ENCODE measurements at regions of chr2 and their contacts with region 1.

Region 1: DNA sequence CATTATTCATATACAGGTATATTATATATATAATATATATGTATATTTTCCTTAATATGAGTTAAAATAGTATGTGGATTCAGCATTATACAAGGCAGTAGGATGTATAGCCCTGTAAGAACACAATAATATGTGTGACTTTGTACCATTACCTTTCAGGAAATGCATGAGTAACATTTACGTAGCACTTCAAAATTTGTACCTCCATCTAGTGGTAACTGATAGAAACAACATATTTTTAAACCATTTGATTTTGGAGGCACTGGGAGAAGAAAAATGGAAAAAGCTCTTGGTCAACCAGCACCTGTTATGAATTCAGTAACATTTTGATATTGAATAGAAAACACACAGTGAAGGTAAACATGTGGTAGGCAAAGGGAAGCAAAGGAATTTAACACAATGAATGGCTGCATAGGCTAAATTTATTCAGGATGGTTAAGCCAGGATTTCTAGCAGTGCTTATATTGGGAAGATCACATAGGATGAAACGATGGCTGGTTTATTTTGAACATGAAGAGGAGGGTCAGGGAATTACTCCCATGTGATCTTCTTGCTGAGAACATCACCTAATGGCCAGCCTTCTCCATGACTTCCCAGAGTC is 565.5 kb downstream of the CCDC85A start:
- H3K4me3 ChIP-seq: no peak overlapping the region
- H3K27ac ChIP-seq: no peak overlapping the region
- H3K4me1 ChIP-seq: no peaks in the 10 kb centered on the region
- CTCF ChIP-seq: no peak

Region 2: GRCh38 chr2:56183643-56184499 is 565.4 kb before region 1 on chr2 and contains the start of gene CCDC85A:
- CTCF ChIA-PET with region 1: interaction called, 11 read pairs
- POLR2A ChIA-PET with region 1: no interaction called
- H3K4me3 ChIP-seq: peak within 1 kb of the TSS; percentile 57
- H3K27ac ChIP-seq: peak within 1 kb of the TSS; percentile 46; the same call in 1 of the 2 replicates
- H3K4me1 ChIP-seq: no peaks in the 10 kb centered on the region
- CTCF ChIP-seq: peak; percentile 96

Region 3: DNA sequence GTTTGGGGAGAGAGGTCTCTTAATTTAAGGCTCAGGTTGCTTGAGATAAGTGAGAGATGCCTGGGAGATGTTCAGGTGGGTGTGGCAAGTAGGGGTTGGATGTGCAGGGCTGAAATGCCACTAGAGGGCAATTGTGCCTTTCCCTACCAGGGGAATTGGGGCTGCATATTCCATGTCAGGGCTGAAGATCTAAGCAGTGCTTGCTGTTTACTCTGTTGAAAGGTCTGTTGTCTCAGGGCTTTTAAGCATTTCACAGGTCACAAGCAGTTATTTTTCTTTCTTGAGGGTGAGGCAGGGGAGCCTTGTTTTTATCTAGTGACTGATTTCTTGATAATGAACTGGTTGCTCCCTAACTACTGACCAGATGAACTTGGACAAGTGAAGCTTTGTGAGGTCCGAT is 557.6 kb before region 1 on chr2:
- CTCF ChIA-PET with region 1: interaction called, 10 read pairs
- POLR2A ChIA-PET with region 1: no interaction called
- H3K4me3 ChIP-seq: no peak overlapping the region
- H3K27ac ChIP-seq: no peak overlapping the region
- H3K4me1 ChIP-seq: no peaks in the 10 kb centered on the region
- CTCF ChIP-seq: peak; percentile 79

Measured in HEK293 (cell line).